GM12878 (cell line): ENCODE measurements at regions of chr17 and their contacts with region 1.

Region 1: GRCh38 chr17:32486111-32486700 is 587 bp upstream of the CDK5R1 start:
- DNase-seq: no peak
- ATAC-seq: peak; percentile 62
- H3K4me3 ChIP-seq: peak overlapping the region; percentile 28; the same call in 1 of the 2 replicates
- H3K27ac ChIP-seq: 0 out of 2 replicates have a peak overlapping the region, but pooled peaks have one; percentile 33
- H3K4me1 ChIP-seq: peaks cover 11% of the 10 kb centered on the region
- H3K27me3 ChIP-seq: no peaks in the 10 kb centered on the region
- CTCF ChIP-seq: no peak
- EP300 ChIP-seq: no peak
- POLR2A ChIP-seq: peak; percentile 32; the same call in 1 of the 2 replicates
- RAD21 ChIP-seq: no peak

Region 2: GRCh38 chr17:32123782-32124181 is 362.4 kb before region 1 on chr17:
- CTCF ChIA-PET with region 1: no interaction called
- POLR2A ChIA-PET with region 1: no interaction called
- RAD21 ChIA-PET with region 1: no interaction called
- SMC1A ChIA-PET with region 1: no interaction called
- in situ Hi-C with region 1: no loop called
- intact Hi-C with region 1: no loop called
- DNase-seq: no peak
- ATAC-seq: no peak
- H3K4me3 ChIP-seq: no peak overlapping the region
- H3K27ac ChIP-seq: no peak overlapping the region
- H3K4me1 ChIP-seq: peaks cover 7% of the 10 kb centered on the region; the same call in 1 of the 2 replicates
- H3K27me3 ChIP-seq: no peaks in the 10 kb centered on the region
- CTCF ChIP-seq: no peak
- EP300 ChIP-seq: no peak
- POLR2A ChIP-seq: no peak
- RAD21 ChIP-seq: no peak

Region 3: GRCh38 chr17:32525122-32525521 is 38.9 kb after region 1 on chr17:
- CTCF ChIA-PET with region 1: interaction called, 83 read pairs
- POLR2A ChIA-PET with region 1: interaction called, 308 read pairs
- RAD21 ChIA-PET with region 1: interaction called, 543 read pairs
- SMC1A ChIA-PET with region 1: interaction called, 286 read pairs
- in situ Hi-C with region 1: no loop called
- intact Hi-C with region 1: loop called (anchors 1 kb)
- DNase-seq: no peak
- ATAC-seq: no peak
- H3K4me3 ChIP-seq: no peak overlapping the region
- H3K27ac ChIP-seq: peak overlapping the region; percentile 97
- H3K4me1 ChIP-seq: peaks cover 49% of the 10 kb centered on the region
- H3K27me3 ChIP-seq: no peaks in the 10 kb centered on the region
- CTCF ChIP-seq: no peak
- EP300 ChIP-seq: no peak
- POLR2A ChIP-seq: no peak
- RAD21 ChIP-seq: no peak

Region 4: GRCh38 chr17:32575880-32576279 is 89.7 kb after region 1 on chr17:
- CTCF ChIA-PET with region 1: interaction called, 17 read pairs
- POLR2A ChIA-PET with region 1: interaction called, 4 read pairs
- RAD21 ChIA-PET with region 1: interaction called, 3 read pairs
- SMC1A ChIA-PET with region 1: interaction called, 5 read pairs
- in situ Hi-C with region 1: no loop called
- intact Hi-C with region 1: no loop called
- DNase-seq: no peak
- ATAC-seq: peak; percentile 66
- H3K4me3 ChIP-seq: no peak overlapping the region
- H3K27ac ChIP-seq: no peak overlapping the region
- H3K4me1 ChIP-seq: peaks cover 8% of the 10 kb centered on the region
- H3K27me3 ChIP-seq: no peaks in the 10 kb centered on the region
- CTCF ChIP-seq: no peak
- EP300 ChIP-seq: no peak
- POLR2A ChIP-seq: no peak
- RAD21 ChIP-seq: no peak

Region 5: DNA sequence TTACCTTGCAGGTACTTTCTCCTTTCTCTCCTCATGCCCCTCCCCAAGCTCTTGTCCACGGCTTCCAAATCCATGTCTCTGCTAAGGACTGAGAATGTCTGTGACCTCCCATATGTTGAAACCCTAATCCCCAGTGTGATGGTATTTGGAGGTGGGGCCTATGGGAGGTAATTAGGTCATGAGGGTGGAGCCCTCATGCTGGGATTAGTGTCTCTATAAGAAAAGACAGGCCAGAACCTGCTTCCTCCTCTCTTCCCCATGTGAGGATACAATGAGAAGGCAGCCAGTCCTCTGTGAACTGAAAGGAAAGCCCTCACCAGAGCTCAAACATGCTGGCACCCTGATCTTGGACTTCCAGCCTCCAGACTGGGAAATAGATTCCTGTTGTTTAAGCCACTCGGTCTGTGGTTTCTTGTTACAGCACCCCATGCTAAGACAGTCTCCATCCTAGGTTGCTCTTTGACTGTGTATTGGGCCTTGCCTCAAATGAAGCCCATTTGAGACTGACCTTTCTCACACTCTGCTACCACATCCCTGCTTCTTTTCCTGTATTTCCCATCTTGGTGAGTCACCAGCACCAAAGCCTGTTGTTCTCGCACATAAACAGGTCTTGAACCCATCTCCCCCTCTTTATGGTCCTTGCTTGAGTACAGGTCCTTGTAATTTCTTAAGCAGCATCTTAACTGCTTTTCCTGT is 135.6 kb after region 1 on chr17:
- CTCF ChIA-PET with region 1: interaction called, 7 read pairs
- POLR2A ChIA-PET with region 1: no interaction called
- RAD21 ChIA-PET with region 1: interaction called, 10 read pairs
- SMC1A ChIA-PET with region 1: interaction called, 4 read pairs
- in situ Hi-C with region 1: no loop called
- intact Hi-C with region 1: no loop called
- DNase-seq: no peak
- ATAC-seq: no peak
- H3K4me3 ChIP-seq: no peak overlapping the region
- H3K27ac ChIP-seq: no peak overlapping the region
- H3K4me1 ChIP-seq: no peaks in the 10 kb centered on the region
- H3K27me3 ChIP-seq: no peaks in the 10 kb centered on the region
- CTCF ChIP-seq: no peak
- EP300 ChIP-seq: no peak
- POLR2A ChIP-seq: no peak
- RAD21 ChIP-seq: no peak

Region 6: DNA sequence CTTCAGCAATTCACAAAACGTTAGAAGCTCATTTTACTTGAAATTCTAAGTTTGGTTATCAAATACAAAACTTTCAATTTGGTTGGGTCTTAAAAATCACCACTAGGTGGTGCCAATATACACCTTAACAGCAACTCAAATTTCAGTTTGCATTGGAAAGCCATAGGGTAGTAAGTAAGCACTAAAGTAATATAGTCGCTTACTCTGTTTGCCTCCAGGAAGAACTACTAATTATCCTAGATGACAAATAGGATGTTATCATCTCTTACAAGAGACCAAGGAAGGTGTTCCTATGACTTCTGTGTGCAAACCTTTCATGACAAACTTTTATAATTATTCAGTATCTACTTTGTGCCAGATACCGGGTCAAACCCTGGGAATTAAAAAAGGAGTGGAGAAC is 297.4 kb after region 1 on chr17:
- CTCF ChIA-PET with region 1: interaction called, 16 read pairs
- POLR2A ChIA-PET with region 1: interaction called, 3 read pairs
- RAD21 ChIA-PET with region 1: interaction called, 16 read pairs
- SMC1A ChIA-PET with region 1: interaction called, 29 read pairs
- in situ Hi-C with region 1: no loop called
- intact Hi-C with region 1: no loop called
- DNase-seq: peak; percentile 32
- ATAC-seq: peak; percentile 82
- H3K4me3 ChIP-seq: no peak overlapping the region
- H3K27ac ChIP-seq: no peak overlapping the region
- H3K4me1 ChIP-seq: peaks cover 3% of the 10 kb centered on the region
- H3K27me3 ChIP-seq: no peaks in the 10 kb centered on the region
- CTCF ChIP-seq: peak; percentile 41 to 80 (median 60); a peak in 5 of 6 replicates
- EP300 ChIP-seq: no peak
- POLR2A ChIP-seq: no peak
- RAD21 ChIP-seq: peak; percentile 88